ENCODE measurements at regions of chr5 and their contacts with region 1.

Region 1: GRCh38 chr5:62779010-62779422 is 200.4 kb downstream of the LRRC70 start:
- DNase-seq: peak; percentile 6 to 40
- H3K4me3 ChIP-seq: no peak overlapping the region
- H3K27ac ChIP-seq: no peak overlapping the region
- H3K4me1 ChIP-seq: no peaks in the 10 kb centered on the region
- H3K27me3 ChIP-seq: no peaks in the 10 kb centered on the region
- CTCF ChIP-seq: peak; percentile 80

Region 2: GRCh38 chr5:62231576-62231975 is 547.4 kb before region 1 on chr5:
- CTCF ChIA-PET with region 1: no interaction called
- POLR2A ChIA-PET with region 1: no interaction called
- intact Hi-C with region 1: loop called (anchors 10 kb)
- DNase-seq: no peak
- H3K4me3 ChIP-seq: no peak overlapping the region
- H3K27ac ChIP-seq: no peak overlapping the region
- H3K4me1 ChIP-seq: peaks cover 10% of the 10 kb centered on the region
- H3K27me3 ChIP-seq: no peaks in the 10 kb centered on the region
- CTCF ChIP-seq: no peak

Region 3: GRCh38 chr5:62362701-62363100 is 416.3 kb before region 1 on chr5:
- CTCF ChIA-PET with region 1: no interaction called
- POLR2A ChIA-PET with region 1: no interaction called
- intact Hi-C with region 1: loop called (anchors 5 kb)
- DNase-seq: no peak
- H3K4me3 ChIP-seq: no peak overlapping the region
- H3K27ac ChIP-seq: no peak overlapping the region
- H3K4me1 ChIP-seq: no peaks in the 10 kb centered on the region
- H3K27me3 ChIP-seq: no peaks in the 10 kb centered on the region
- CTCF ChIP-seq: no peak

Region 4: DNA sequence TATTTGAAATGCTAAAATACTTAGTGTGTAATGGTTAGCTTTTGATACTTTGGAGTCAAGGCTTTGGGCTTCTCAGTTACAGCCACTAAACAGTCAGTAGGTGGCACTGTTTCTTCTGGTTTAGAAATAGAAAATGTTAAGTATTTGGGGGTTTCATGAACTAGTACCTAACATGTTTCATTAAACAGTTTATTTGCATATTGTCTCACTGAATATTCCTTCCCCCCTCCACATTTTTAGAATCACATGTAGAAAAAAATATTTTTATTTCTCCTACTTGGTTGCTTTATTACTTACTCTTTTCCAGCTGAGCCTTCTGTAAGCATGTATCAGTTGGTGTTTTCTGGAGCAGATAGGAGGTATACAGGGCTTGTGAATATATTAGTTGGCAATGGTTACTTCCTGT is 318.4 kb before region 1 on chr5:
- CTCF ChIA-PET with region 1: no interaction called
- POLR2A ChIA-PET with region 1: no interaction called
- intact Hi-C with region 1: loop called (anchors 1 kb)
- DNase-seq: no peak
- H3K4me3 ChIP-seq: no peak overlapping the region
- H3K27ac ChIP-seq: no peak overlapping the region
- H3K4me1 ChIP-seq: no peaks in the 10 kb centered on the region
- H3K27me3 ChIP-seq: no peaks in the 10 kb centered on the region
- CTCF ChIP-seq: peak; percentile 83

Region 5: DNA sequence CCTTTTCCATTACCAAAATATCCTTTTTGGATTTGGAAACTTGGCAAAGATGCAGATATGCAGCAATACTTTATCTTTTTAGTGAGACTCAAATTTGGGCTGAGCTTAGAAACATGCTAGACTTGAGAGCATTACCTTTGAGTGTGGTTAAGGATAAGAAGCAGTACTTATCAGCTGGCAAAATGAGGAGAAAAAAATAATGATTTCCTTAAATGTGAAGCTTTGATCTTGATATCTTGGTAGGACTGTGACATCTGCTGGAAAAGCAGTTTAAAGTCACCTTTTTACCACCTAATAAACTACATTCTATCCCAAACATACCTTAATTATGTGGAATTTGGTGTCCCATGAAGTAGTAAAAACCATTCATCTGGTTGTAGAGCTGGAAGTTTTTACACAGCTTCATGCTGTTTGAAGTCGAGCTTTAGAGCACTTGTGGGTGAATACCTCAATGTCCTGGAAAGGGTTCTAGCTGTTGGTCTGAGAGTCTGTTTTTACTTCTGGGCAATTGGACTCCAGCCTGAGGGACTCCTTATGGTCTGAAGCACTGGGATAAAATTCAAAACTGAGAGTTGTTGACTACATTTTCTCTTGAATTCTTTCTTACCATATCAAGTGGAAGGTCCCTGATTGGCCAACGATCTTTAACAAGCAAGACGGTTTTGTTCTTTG is 147.0 kb before region 1 on chr5:
- CTCF ChIA-PET with region 1: interaction called, 12 read pairs
- POLR2A ChIA-PET with region 1: no interaction called
- intact Hi-C with region 1: no loop called
- DNase-seq: no peak
- H3K4me3 ChIP-seq: no peak overlapping the region
- H3K27ac ChIP-seq: no peak overlapping the region
- H3K4me1 ChIP-seq: no peaks in the 10 kb centered on the region
- H3K27me3 ChIP-seq: no peaks in the 10 kb centered on the region
- CTCF ChIP-seq: no peak

Measured in PC-9 (cell line).